ENCODE measurements at regions of chr12 and their contacts with region 1.

Region 1: GRCh38 chr12:50074936-50075807 is 10.0 kb upstream of the SMARCD1 start:
- DNase-seq: peak; percentile 77 to 87
- H3K4me3 ChIP-seq: no peak overlapping the region
- H3K27ac ChIP-seq: no peak overlapping the region
- H3K4me1 ChIP-seq: peaks cover 0 to 7% (median 2%) of the 10 kb centered on the region in 4 donors
- H3K27me3 ChIP-seq: no peaks in the 10 kb centered on the region
- CTCF ChIP-seq: peak; percentile 95

Region 2: GRCh38 chr12:50043854-50044253 is 31.3 kb before region 1 on chr12:
- intact Hi-C with region 1: loop called (anchors 1 kb)
- DNase-seq: peak in 1 of 2 donors; percentile 31
- H3K4me3 ChIP-seq: no peak overlapping the region
- H3K27ac ChIP-seq: no peak overlapping the region
- H3K4me1 ChIP-seq: no peaks in the 10 kb centered on the region
- H3K27me3 ChIP-seq: peaks cover 0 to 5% of the 10 kb centered on the region in 2 donors
- CTCF ChIP-seq: no peak

Region 3: GRCh38 chr12:50162230-50162629 is 87.1 kb after region 1 on chr12:
- intact Hi-C with region 1: no loop called
- DNase-seq: no peak
- H3K4me3 ChIP-seq: no peak overlapping the region
- H3K27ac ChIP-seq: no peak overlapping the region
- H3K4me1 ChIP-seq: peaks cover 0 to 35% (median 10%) of the 10 kb centered on the region in 4 donors
- H3K27me3 ChIP-seq: no peaks in the 10 kb centered on the region
- CTCF ChIP-seq: no peak

Region 4: DNA sequence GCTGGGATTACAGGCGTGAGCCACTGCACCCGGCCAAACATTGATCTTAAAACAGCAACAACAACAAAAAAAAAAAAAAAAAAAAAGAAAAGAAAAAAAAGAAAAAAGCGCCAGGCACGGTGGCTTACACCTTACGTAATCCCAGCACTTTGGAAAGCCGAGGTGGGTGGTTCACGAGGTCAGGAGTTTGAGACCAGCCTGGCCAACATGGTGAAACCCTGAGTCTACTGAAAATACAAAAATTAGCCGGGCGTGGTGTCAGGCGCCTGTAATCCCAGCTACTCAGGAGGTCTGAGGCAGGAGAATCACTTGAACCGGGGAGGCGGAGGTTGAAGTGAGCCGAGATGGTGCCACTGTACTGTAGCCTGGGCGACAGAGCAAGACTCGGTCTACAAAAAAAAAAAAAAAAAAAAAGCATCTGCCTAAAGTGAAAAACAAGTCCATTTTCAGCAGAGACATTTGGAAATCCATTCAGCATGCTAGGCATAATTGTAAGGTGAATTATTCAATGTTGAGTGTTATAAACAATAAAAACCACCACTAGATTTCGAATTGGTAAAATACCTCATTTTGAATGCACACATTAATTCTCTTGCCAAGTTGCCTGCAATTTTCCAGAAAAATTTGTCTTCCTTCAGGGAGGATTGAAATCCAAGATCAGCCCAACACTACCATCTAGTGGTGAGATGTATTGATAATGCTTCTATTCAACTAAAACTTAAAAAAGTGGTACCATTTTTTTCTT is 100.0 kb after region 1 on chr12:
- intact Hi-C with region 1: loop called (anchors 5 kb)
- DNase-seq: no peak
- H3K4me3 ChIP-seq: no peak overlapping the region
- H3K27ac ChIP-seq: peak overlapping the region in 1 of 2 donors; percentile 0
- H3K4me1 ChIP-seq: peaks cover 0 to 5% (median 0%) of the 10 kb centered on the region in 4 donors
- H3K27me3 ChIP-seq: no peaks in the 10 kb centered on the region
- CTCF ChIP-seq: peak; percentile 55 to 81

Region 5: DNA sequence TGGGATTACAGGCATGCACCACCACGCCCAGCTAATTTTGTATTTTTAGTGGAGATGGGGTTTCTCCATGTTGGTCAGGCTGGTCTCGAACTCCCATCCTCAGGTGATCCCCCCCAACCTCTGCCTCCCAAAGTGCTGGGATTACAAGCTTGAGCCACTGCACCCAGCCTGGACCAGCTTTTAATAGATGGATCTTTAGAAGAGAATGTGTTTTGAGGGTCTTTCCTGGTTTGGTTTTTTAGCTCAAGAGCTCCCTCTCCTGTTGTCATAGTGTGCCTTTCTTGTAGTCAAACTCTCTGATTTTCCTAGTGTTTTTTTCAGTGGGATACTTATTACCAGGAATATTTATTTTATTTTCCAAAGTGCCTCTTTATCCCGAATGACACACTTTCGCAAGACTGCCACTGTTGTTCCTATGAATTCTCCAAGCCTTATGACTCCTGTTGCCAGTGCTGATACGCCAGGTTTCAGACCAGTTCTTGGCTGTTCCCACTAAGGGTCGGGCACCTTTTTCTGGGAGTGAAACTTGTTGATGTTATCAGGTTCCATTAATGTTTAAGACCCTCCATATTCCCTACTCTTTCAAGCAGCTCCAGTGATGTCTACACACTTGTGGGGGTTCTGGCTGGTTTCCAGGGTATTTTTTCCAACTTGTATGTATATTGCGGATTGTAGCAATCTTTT is 239.6 kb after region 1 on chr12:
- intact Hi-C with region 1: loop called (anchors 5 kb)
- DNase-seq: no peak
- H3K4me3 ChIP-seq: no peak overlapping the region
- H3K27ac ChIP-seq: no peak overlapping the region
- H3K4me1 ChIP-seq: peaks cover 0 to 4% (median 0%) of the 10 kb centered on the region in 4 donors
- H3K27me3 ChIP-seq: no peaks in the 10 kb centered on the region
- CTCF ChIP-seq: peak; percentile 50 to 65